B cell (primary cell): ENCODE measurements at regions of chr1 and their contacts with region 1.

Region 1: DNA sequence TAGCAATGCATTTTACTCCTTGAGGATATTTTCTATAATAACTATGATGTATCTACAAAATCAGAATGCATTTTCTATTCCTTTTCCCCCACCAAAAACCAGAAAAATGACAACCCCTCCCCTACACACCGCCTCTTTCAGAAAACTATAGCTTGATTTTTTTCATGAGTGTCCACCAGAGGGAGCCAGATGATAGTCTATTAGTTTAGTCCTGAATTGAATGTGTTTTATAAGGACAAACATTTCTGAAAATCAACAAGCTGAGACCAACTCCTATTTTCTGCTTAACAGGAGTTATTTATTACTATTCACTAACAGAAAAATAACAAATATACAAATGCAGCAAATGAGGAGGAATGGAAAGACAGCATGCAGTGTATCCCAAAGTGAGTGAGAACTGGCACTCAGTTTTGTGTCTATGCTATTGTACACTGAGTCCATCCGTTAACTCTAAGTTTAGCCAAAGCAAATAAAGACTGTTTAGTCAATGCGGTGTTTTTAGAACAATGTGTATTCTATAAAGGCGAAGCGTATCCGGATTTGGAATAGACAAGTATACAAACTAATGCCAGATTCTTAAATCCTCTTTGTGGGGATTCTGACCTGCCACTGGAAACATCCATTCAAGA is 182.6 kb downstream of the VAV3 start:
- DNase-seq: peak; percentile 81
- ATAC-seq: no peak
- H3K4me3 ChIP-seq: no peak overlapping the region
- H3K4me3 Mint-ChIP-seq: no peak overlapping the region
- H3K27ac ChIP-seq: peak overlapping the region in 1 of 2 donors; percentile 38
- H3K27ac Mint-ChIP-seq: no peak overlapping the region
- H3K4me1 ChIP-seq: peaks cover 42 to 51% of the 10 kb centered on the region in 2 donors
- H3K4me1 Mint-ChIP-seq: peaks cover 56% of the 10 kb centered on the region
- H3K27me3 ChIP-seq: no peaks in the 10 kb centered on the region
- H3K27me3 Mint-ChIP-seq: no peaks in the 10 kb centered on the region
- CTCF ChIP-seq: peak; percentile 93

Region 2: DNA sequence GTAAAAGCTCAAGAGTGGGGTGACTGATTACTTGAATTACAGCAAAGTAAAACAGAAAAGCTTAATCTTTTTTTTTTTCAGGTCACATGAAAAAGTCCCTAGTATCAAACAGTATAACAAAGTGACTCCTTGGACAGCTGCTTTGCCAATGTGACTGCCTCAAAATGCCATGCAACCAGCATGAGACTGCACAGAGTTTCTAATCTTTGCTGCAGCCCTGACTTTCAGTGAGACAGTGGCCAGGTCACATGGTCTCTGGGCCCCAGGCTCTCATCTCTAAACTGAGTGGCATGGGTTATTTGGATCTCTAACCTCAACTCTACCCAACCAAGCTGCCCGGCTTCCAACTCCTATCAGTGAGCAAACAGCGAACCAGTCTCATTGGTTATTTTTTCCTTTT is 13.7 kb after region 1 on chr1:
- CTCF ChIA-PET with region 1: interaction called, 69 read pairs
- POLR2A ChIA-PET with region 1: no interaction called
- intact Hi-C with region 1: no loop called
- DNase-seq: peak; percentile 40
- ATAC-seq: peak; percentile 40
- H3K4me3 ChIP-seq: peak overlapping the region in 1 of 5 experiments; percentile 18
- H3K4me3 Mint-ChIP-seq: peak overlapping the region; percentile 62
- H3K27ac ChIP-seq: peak overlapping the region; percentile 61 to 88
- H3K27ac Mint-ChIP-seq: peak overlapping the region; percentile 42
- H3K4me1 ChIP-seq: peaks cover 68 to 84% of the 10 kb centered on the region in 2 donors
- H3K4me1 Mint-ChIP-seq: peaks cover 76% of the 10 kb centered on the region
- H3K27me3 ChIP-seq: no peaks in the 10 kb centered on the region
- H3K27me3 Mint-ChIP-seq: no peaks in the 10 kb centered on the region
- CTCF ChIP-seq: no peak

Region 3: DNA sequence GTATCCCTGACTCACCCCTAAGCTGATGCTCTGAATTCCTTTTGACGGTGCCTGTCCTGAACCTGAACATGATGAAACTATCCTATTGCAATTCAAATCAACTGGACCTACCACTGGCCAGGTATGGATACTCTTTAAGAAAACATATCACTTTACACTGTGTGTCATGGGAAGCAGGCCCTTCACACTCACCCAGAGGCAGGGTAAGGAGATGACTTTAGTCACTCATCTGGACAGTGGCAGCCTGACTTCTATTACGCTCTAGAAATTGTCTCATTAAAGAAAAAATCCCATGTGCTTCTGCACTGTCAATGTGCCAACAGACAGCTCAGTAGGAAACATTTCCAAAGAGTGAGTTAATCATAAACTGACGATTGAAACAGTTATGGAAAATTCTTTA is 88.4 kb after region 1 on chr1:
- CTCF ChIA-PET with region 1: interaction called, 10 read pairs
- POLR2A ChIA-PET with region 1: no interaction called
- intact Hi-C with region 1: no loop called
- DNase-seq: no peak
- ATAC-seq: no peak
- H3K4me3 ChIP-seq: no peak overlapping the region
- H3K4me3 Mint-ChIP-seq: peak overlapping the region; percentile 10
- H3K27ac ChIP-seq: peak overlapping the region; percentile 23 to 86
- H3K27ac Mint-ChIP-seq: peak overlapping the region; percentile 61
- H3K4me1 ChIP-seq: peaks cover 61 to 74% of the 10 kb centered on the region in 2 donors
- H3K4me1 Mint-ChIP-seq: peaks cover 90% of the 10 kb centered on the region
- H3K27me3 ChIP-seq: no peaks in the 10 kb centered on the region
- H3K27me3 Mint-ChIP-seq: no peaks in the 10 kb centered on the region
- CTCF ChIP-seq: no peak

Region 4: DNA sequence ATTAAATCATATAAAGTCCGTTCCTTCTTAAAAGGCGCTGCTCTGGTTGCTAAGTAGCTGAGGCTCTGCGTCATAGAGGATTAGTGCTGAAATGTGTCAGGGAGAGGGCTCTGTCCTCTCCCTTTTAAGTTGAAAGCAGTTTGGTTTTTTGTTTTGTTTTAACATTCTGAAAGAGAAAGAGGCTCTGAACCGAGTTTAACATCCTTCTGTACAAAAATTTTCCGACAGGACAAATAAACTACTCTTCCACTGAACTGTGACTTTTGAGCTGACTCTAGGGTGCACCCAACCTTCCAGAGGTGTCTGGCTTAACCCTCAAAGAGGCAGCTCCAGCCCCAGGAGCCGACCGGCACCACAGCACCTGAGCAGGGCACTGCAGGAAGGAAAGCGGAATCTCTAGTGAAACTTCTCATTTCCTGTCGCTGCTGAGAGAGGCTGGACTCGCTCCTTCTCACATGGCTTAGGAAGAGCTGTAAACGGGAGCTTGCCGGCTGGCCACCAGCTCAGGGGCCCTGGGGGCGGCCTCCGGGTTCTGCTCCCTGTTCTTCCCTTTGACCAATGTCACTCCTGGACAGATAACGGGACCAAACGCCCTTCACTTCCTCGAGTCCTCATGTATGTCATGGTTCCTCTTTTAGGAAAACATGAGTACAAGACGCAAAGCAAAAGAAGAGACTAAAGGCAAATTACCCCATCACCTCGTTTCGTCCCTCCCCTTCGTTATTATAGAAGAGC is 181.4 kb after region 1 on chr1:
- CTCF ChIA-PET with region 1: interaction called, 118 read pairs
- POLR2A ChIA-PET with region 1: interaction called, 9 read pairs
- intact Hi-C with region 1: loop called (anchors 1 kb)
- DNase-seq: peak; percentile 87
- ATAC-seq: peak; percentile 53
- H3K4me3 ChIP-seq: peak overlapping the region; percentile 86 to 98 (median 90)
- H3K4me3 Mint-ChIP-seq: peak overlapping the region; percentile 98
- H3K27ac ChIP-seq: peak overlapping the region; percentile 93 to 96
- H3K27ac Mint-ChIP-seq: peak overlapping the region; percentile 99
- H3K4me1 ChIP-seq: peaks cover 36 to 42% of the 10 kb centered on the region in 2 donors
- H3K4me1 Mint-ChIP-seq: peaks cover 51% of the 10 kb centered on the region
- H3K27me3 ChIP-seq: no peaks in the 10 kb centered on the region
- H3K27me3 Mint-ChIP-seq: no peaks in the 10 kb centered on the region
- CTCF ChIP-seq: no peak

Region 5: GRCh38 chr1:108041360-108042142 is 259.2 kb after region 1 on chr1:
- CTCF ChIA-PET with region 1: interaction called, 10 read pairs
- POLR2A ChIA-PET with region 1: no interaction called
- intact Hi-C with region 1: loop called (anchors 10 kb)
- DNase-seq: peak; percentile 68
- ATAC-seq: peak; percentile 60
- H3K4me3 ChIP-seq: peak overlapping the region in 1 of 5 experiments; percentile 25
- H3K4me3 Mint-ChIP-seq: peak overlapping the region; percentile 67
- H3K27ac ChIP-seq: peak overlapping the region; percentile 61 to 80
- H3K27ac Mint-ChIP-seq: peak overlapping the region; percentile 79
- H3K4me1 ChIP-seq: peaks cover 34 to 37% of the 10 kb centered on the region in 2 donors
- H3K4me1 Mint-ChIP-seq: peaks cover 38% of the 10 kb centered on the region
- H3K27me3 ChIP-seq: no peaks in the 10 kb centered on the region
- H3K27me3 Mint-ChIP-seq: no peaks in the 10 kb centered on the region
- CTCF ChIP-seq: no peak

Region 6: DNA sequence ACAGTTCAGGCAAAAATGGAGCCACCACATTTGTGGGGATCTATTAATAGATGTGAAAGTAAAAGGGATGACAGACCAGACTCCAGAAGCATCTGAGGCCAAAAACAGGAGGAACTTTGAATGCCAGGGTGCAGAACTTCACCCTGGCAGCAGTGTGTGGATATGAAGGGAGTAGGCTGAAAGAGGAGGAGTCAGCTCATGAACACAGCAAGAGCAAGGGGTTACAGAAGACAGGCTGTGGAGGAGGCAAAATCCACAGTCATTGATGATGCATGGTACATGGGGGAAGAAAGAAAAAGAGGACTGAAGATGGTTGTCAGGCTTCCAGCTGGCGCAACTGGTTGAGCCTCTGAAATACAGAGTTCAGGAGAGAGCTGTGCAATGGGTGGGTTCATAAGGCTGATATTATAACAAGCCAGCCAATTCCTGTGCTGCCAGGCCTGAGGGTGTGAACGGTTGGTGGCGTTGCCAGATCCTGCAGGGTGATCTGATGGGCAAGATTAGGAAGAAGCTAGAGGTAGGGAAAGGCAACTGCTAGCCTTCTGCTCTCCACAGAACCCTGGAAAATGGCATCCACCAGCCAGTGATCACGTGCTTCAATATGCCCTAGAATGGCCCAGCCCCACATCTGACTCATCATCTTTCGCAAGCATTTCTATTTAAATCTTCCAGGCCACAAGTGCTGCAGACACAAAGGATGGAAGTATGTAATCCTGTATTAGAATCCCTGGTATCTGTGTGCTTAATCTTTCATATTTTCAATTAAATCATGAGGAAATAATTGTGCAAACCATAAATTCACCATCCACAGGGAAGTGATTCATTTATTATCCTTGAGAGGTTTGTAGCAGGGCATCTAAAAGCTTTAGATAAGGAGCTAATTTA is 335.9 kb after region 1 on chr1:
- CTCF ChIA-PET with region 1: interaction called, 709 read pairs
- POLR2A ChIA-PET with region 1: no interaction called
- intact Hi-C with region 1: no loop called
- DNase-seq: no peak
- ATAC-seq: no peak
- H3K4me3 ChIP-seq: no peak overlapping the region
- H3K4me3 Mint-ChIP-seq: no peak overlapping the region
- H3K27ac ChIP-seq: no peak overlapping the region
- H3K27ac Mint-ChIP-seq: no peak overlapping the region
- H3K4me1 ChIP-seq: peaks cover 14 to 17% of the 10 kb centered on the region in 2 donors
- H3K4me1 Mint-ChIP-seq: peaks cover 20% of the 10 kb centered on the region
- H3K27me3 ChIP-seq: no peaks in the 10 kb centered on the region
- H3K27me3 Mint-ChIP-seq: peaks cover 11% of the 10 kb centered on the region
- CTCF ChIP-seq: no peak

Region 7: DNA sequence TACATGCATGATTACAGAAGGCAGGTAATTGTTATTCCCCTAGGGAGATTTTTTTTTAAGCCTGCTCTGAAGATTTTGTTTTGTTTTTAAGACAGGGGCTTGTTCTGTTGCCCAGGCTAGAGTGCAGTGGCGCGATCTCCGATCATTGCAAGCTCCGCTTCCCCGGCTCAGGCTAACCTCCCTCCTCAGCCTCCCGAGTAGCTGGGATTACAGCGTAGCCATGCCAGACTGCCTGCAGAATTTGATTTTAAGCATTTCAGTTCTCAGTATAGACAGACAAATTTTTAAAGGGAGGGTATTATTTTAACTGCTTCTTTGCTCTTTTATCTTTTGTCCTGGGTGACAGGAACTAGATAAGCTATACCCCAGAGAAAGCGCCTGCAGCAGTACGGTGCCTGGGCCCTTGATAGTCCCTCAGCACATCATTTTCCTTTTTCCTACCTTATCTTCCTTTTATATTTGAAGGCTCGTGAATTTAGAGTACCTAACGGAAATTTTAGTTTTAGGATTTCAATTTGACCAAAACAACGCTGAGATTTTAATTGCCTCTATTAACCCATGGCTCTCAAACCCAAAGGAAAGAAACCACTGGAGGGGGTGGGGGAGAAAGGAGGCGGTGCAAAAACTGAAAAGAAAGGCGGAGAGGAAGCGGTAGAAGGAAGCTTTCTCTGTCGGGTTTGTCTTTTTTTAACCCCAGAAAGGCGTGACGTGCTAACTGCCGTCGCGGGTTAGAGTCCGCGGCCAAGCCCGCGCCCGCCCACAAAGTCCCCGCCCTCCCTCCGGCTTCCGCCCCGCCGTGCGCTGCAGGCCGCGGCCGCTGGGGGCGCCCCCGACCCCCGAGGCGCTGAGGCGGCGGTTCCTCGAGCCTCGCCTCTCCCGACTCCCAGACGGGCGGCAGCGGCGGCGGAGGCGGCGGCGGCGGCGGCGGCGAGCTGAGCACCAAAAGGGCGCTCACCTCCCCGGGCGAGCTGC is 777.2 kb after region 1 on chr1 and contains the start of gene EEIG2:
- CTCF ChIA-PET with region 1: interaction called, 6 read pairs
- POLR2A ChIA-PET with region 1: no interaction called
- intact Hi-C with region 1: loop called (anchors 5 kb)
- DNase-seq: peak; percentile 96
- ATAC-seq: peak; percentile 90
- H3K4me3 ChIP-seq: peak within 1 kb of the TSS; percentile 57 to 85 (median 74)
- H3K4me3 Mint-ChIP-seq: peak within 1 kb of the TSS; percentile 98
- H3K27ac ChIP-seq: peak within 1 kb of the TSS; percentile 75 to 82
- H3K27ac Mint-ChIP-seq: peak within 1 kb of the TSS; percentile 92
- H3K4me1 ChIP-seq: peaks cover 54 to 59% of the 10 kb centered on the region in 2 donors
- H3K4me1 Mint-ChIP-seq: peaks cover 29% of the 10 kb centered on the region
- H3K27me3 ChIP-seq: no peaks in the 10 kb centered on the region
- H3K27me3 Mint-ChIP-seq: no peaks in the 10 kb centered on the region
- CTCF ChIP-seq: peak; percentile 75
- total RNA-seq, gene EEIG2: 11.7 and 13.6 TPM in 2 replicates